Panc1 (cell line): ENCODE measurements at regions of chr12 and their contacts with region 1.

Region 1: DNA sequence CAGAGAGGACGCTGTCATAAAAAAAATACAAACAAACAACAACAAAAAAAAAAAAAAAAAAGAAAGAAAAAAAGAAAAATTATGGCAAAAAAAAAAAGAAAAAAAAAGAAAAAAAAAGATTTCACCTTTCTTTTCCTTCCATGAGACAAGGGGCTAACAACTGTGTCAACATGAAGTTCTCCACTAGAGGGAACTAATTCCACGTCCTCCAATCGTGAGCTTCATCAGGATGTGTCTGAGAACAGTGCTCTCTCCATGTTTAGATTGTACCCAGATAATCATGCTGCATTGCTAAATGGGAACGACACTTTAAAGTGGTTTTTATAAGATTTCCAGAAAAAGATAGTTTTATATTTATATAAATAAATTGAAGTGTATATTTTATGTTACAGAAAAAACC is 96.2 kb upstream of the PTPRB start:
- DNase-seq: peak; percentile 45
- ATAC-seq: peak; percentile 80
- H3K4me3 ChIP-seq: no peak overlapping the region
- H3K27ac ChIP-seq: no peak overlapping the region
- H3K4me1 ChIP-seq: no peaks in the 10 kb centered on the region
- H3K27me3 ChIP-seq: no peaks in the 10 kb centered on the region; the same call in 1 of the 2 replicates
- CTCF ChIP-seq: peak; percentile 71; the same call in 1 of the 2 replicates

Region 2: DNA sequence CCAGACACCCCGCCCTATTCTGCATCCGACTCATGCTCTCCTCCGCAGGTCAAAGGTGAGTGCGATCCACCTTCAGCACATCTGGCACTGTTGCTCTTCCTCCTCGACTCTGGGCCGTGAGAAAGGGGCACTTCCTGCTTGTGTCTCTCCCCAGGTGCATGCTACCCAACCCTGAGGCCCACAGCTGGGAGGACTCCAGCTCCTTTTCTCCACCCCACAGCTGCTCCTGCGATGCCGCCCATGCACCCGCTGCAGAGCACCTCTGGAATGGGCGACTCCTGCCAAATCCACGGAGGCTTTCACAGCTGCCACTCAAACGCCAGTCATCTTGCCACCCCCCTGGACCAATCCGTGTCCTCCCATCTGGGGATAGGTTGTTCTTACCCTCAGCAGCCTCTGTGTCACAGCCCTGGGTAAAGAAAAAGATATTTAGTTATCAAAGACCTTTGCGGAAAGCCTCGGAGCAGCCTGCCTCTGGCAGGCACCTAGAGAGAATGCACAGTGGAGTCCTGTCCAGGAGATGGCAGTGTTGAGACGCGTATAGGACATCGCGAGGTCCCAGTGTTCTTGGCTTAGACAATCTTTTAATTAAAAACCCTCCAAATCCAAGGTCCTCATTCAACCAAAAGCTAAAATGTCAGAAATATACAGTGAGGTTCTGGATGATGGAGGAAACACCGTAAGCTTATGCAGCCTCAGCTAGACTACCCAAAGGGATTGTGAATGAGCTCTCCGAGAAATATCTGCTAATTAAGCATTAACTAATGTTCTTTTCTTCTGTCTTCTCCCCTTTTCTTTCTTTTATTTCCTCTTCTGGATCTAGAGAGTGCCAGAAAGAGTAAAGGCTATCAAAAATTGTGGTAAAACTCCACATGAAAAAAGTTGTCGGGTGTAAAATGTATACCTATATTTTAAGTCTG is 854.1 kb before region 1 on chr12:
- CTCF ChIA-PET with region 1: no interaction called
- POLR2A ChIA-PET with region 1: no interaction called
- in situ Hi-C with region 1: no loop called
- intact Hi-C with region 1: loop called (anchors 5 kb)
- DNase-seq: no peak
- ATAC-seq: peak; percentile 96
- H3K4me3 ChIP-seq: peak overlapping the region in 1 of 2 experiments; percentile 41; a peak in 2 of 4 replicates
- H3K27ac ChIP-seq: no peak overlapping the region
- H3K4me1 ChIP-seq: no peaks in the 10 kb centered on the region
- H3K27me3 ChIP-seq: peaks cover 6% of the 10 kb centered on the region; the same call in 1 of the 2 replicates
- CTCF ChIP-seq: peak; percentile 91

Region 3: GRCh38 chr12:70590051-70590450 is 143.3 kb before region 1 on chr12:
- CTCF ChIA-PET with region 1: interaction called, 4 read pairs
- POLR2A ChIA-PET with region 1: no interaction called
- in situ Hi-C with region 1: no loop called
- intact Hi-C with region 1: loop called (anchors 2 kb)
- DNase-seq: peak; percentile 36
- ATAC-seq: peak; percentile 87
- H3K4me3 ChIP-seq: no peak overlapping the region
- H3K27ac ChIP-seq: no peak overlapping the region
- H3K4me1 ChIP-seq: no peaks in the 10 kb centered on the region
- H3K27me3 ChIP-seq: peaks cover 3% of the 10 kb centered on the region; the same call in 1 of the 2 replicates
- CTCF ChIP-seq: peak; percentile 87

Region 4: GRCh38 chr12:70645494-70646317 is 87.7 kb before region 1 on chr12:
- CTCF ChIA-PET with region 1: no interaction called
- POLR2A ChIA-PET with region 1: no interaction called
- in situ Hi-C with region 1: no loop called
- intact Hi-C with region 1: no loop called
- DNase-seq: peak; percentile 30
- ATAC-seq: peak; percentile 81
- H3K4me3 ChIP-seq: 0 out of 4 replicates have a peak overlapping the region, but pooled peaks of 1 of the 2 experiments have one; percentile 3
- H3K27ac ChIP-seq: no peak overlapping the region
- H3K4me1 ChIP-seq: no peaks in the 10 kb centered on the region; the same call in 1 of the 2 replicates
- H3K27me3 ChIP-seq: no peaks in the 10 kb centered on the region
- CTCF ChIP-seq: no peak

Region 5: GRCh38 chr12:70849265-70849960 is 116.0 kb after region 1 on chr12:
- CTCF ChIA-PET with region 1: interaction called, 3 read pairs
- POLR2A ChIA-PET with region 1: interaction called, 14 read pairs
- in situ Hi-C with region 1: no loop called
- intact Hi-C with region 1: loop called (anchors 5 kb)
- DNase-seq: no peak
- ATAC-seq: no peak
- H3K4me3 ChIP-seq: no peak overlapping the region
- H3K27ac ChIP-seq: no peak overlapping the region
- H3K4me1 ChIP-seq: no peaks in the 10 kb centered on the region
- H3K27me3 ChIP-seq: no peaks in the 10 kb centered on the region
- CTCF ChIP-seq: peak; percentile 29; the same call in 1 of the 2 replicates

Region 6: DNA sequence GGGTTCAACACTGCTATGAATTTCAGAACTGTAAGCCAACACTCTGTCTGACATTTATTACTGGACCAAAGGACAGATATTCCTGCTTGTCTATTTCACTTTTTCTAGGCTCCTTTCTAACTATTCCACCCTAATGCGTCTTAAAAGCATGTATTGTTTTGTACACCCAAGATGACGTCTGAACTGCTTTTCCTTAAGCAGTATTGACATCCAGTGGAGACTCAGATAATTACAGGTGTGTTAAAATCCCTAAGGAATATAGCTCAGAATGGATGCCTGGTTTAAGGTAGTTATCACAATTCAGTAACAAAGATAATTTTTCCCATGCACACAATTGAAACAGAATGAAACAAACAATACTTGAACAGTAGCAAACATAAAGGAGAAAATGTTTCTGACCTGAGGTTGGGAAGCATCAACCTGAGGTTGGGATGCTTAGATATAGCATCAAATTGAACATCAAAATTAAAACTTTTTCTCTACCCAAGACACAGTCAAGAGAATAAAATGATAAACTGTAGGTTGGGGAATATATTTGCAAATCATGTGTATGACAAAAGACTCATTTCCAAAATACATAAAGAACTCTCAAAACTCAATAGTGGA is 280.9 kb after region 1 on chr12:
- CTCF ChIA-PET with region 1: interaction called, 14 read pairs
- POLR2A ChIA-PET with region 1: no interaction called
- in situ Hi-C with region 1: no loop called
- intact Hi-C with region 1: loop called (anchors 2 kb)
- DNase-seq: no peak
- ATAC-seq: no peak
- H3K4me3 ChIP-seq: no peak overlapping the region
- H3K27ac ChIP-seq: no peak overlapping the region
- H3K4me1 ChIP-seq: no peaks in the 10 kb centered on the region
- H3K27me3 ChIP-seq: no peaks in the 10 kb centered on the region
- CTCF ChIP-seq: peak; percentile 45; the same call in 1 of the 2 replicates

Region 7: GRCh38 chr12:71250166-71250565 is 516.8 kb after region 1 on chr12:
- CTCF ChIA-PET with region 1: interaction called, 11 read pairs
- POLR2A ChIA-PET with region 1: no interaction called
- in situ Hi-C with region 1: no loop called
- intact Hi-C with region 1: no loop called
- DNase-seq: no peak
- ATAC-seq: no peak
- H3K4me3 ChIP-seq: no peak overlapping the region
- H3K27ac ChIP-seq: no peak overlapping the region
- H3K4me1 ChIP-seq: no peaks in the 10 kb centered on the region
- H3K27me3 ChIP-seq: no peaks in the 10 kb centered on the region
- CTCF ChIP-seq: no peak

Region 8: GRCh38 chr12:71392521-71393145 is 659.2 kb after region 1 on chr12:
- CTCF ChIA-PET with region 1: interaction called, 4 read pairs
- POLR2A ChIA-PET with region 1: no interaction called
- in situ Hi-C with region 1: no loop called
- intact Hi-C with region 1: loop called (anchors 10 kb)
- DNase-seq: peak; percentile 42
- ATAC-seq: peak; percentile 63; the same call in 1 of the 2 replicates
- H3K4me3 ChIP-seq: no peak overlapping the region
- H3K27ac ChIP-seq: peak overlapping the region; percentile 36; the same call in 1 of the 2 replicates
- H3K4me1 ChIP-seq: no peaks in the 10 kb centered on the region; the same call in 1 of the 2 replicates
- H3K27me3 ChIP-seq: no peaks in the 10 kb centered on the region
- CTCF ChIP-seq: peak; percentile 85